Cardiac septum (tissue), 1 donor: ENCODE measurements at regions of chr6 and their contacts with region 1.

Region 1: GRCh38 chr6:1767481-1768251 is 158.0 kb downstream of the FOXC1 start:
- DNase-seq: no peak

Region 2: DNA sequence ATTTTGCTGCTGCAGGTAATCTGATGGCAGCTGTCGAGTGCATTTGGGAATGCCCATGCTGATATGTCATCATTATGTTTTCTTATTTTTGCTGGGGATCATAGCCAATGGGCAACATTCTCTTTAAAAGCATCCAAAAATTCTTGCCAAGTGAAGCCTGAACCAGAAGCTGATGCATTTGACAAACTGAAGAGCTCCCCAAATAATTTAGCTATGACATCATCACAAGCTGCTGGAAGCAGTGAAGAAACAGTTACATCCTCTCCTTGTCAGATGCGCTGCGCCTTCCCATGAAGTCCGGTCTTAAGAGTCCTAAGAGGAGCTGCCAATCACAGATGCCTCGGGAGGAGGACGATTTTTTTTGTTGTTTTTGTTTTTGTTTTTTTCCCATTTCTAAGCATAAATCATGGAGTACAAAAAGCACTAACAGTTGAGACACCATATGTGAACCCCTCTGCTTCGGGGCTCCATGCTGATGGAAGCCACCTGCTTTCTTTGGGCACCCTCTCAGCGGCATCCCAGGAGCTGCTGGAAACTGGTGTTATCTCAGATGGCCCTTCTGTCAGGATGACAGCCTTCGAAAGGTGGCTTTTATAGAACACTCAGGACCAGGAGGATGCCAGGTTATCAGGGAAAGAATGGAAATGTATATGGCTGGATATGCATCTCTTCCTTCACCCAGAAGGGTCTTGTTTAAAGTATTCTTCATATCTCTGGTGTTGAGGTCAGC is 511.9 kb before region 1 on chr6:
- intact Hi-C with region 1: no loop called
- DNase-seq: no peak

Region 3: GRCh38 chr6:1624851-1625781 is 142.6 kb before region 1 on chr6:
- intact Hi-C with region 1: loop called (anchors 10 kb)
- DNase-seq: peak; percentile 80

Region 4: GRCh38 chr6:1809291-1809988 is 41.8 kb after region 1 on chr6:
- intact Hi-C with region 1: loop called (anchors 5 kb)
- DNase-seq: no peak